ENCODE measurements at regions of chr1 and their contacts with region 1.

Region 1: GRCh38 chr1:91885716-91886506 is at the start of gene TGFBR3:
- DNase-seq: peak; percentile 91 to 93 (median 92)
- ATAC-seq: peak; percentile 93
- H3K4me3 ChIP-seq: peak within 1 kb of the TSS; percentile 67 to 92
- H3K27ac ChIP-seq: peak within 1 kb of the TSS; percentile 74 to 97 (median 94)
- H3K4me1 ChIP-seq: peaks cover 34% of the 10 kb centered on the region
- H3K27me3 ChIP-seq: no peaks in the 10 kb centered on the region
- CTCF ChIP-seq: peak; percentile 31 to 77 (median 70)
- POLR2A ChIP-seq: peak; percentile 78 to 90 (median 88)
- total RNA-seq, gene TGFBR3: 52.4 to 63.6 TPM

Region 2: GRCh38 chr1:91725989-91726721 is 159.8 kb before region 1 on chr1:
- intact Hi-C with region 1: loop called (anchors 10 kb)
- DNase-seq: peak in 1 of 4 donors; percentile 39
- ATAC-seq: peak; percentile 74
- H3K4me3 ChIP-seq: no peak overlapping the region
- H3K27ac ChIP-seq: peak overlapping the region in 1 of 4 donors; percentile 4
- H3K4me1 ChIP-seq: peaks cover 14% of the 10 kb centered on the region
- H3K27me3 ChIP-seq: no peaks in the 10 kb centered on the region
- CTCF ChIP-seq: no peak
- POLR2A ChIP-seq: no peak

Region 3: DNA sequence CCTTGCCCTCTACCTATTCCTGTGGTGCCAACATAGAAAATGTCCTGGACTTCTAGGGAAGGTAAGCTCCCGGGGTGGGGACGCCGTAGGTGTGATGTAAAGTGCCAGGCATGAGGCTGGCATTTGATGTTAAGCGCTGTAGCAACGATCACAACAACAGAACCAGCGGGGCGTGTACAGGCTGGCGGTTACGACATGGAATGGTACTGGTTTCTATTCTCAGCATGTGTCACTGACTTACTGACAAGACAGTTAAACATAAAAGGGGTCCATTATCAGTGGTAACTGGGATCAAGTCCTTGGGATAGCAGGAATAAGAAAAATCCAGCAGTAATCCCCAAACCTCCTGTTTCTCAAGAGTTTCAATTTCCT is 58.8 kb before region 1 on chr1:
- intact Hi-C with region 1: loop called (anchors 10 kb)
- DNase-seq: peak; percentile 65 to 81 (median 76)
- ATAC-seq: peak; percentile 41
- H3K4me3 ChIP-seq: no peak overlapping the region
- H3K27ac ChIP-seq: peak overlapping the region; percentile 70 to 87 (median 82)
- H3K4me1 ChIP-seq: peaks cover 58% of the 10 kb centered on the region
- H3K27me3 ChIP-seq: no peaks in the 10 kb centered on the region
- CTCF ChIP-seq: no peak
- POLR2A ChIP-seq: no peak

Measured in body of pancreas (tissue), 4 donors.